CD14-positive monocyte (primary cell): ENCODE measurements at regions of chr6 and their contacts with region 1.

Region 1: DNA sequence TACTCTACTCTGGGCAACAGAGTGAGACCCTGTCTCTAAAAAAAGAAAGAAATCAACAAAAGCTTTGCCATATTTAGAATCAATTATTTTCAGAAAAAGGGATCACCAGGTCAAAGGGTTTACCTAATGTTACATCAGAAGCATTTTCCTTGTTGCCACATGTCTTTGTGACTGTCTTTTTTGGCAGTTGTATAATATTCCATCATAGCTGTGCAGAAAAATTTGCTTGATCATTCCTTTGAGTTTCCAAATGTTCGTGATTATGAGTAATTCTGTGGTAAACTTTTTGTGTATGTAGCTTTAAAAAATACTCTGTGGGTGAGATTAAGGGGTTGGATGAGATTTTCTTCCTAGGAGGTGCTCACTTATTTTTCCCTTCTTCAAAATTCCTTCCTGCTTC is 26.4 kb downstream of the PNPLA1 start:
- DNase-seq: peak; percentile 73 to 92 (median 90)
- H3K4me3 ChIP-seq: peak overlapping the region in 1 of 3 experiments; percentile 40
- H3K4me3 Mint-ChIP-seq: peak overlapping the region in 1 of 2 donors; percentile 30
- H3K27ac ChIP-seq: peak overlapping the region; percentile 86 to 90
- H3K27ac Mint-ChIP-seq: peak overlapping the region; percentile 88 to 98 (median 93)
- H3K4me1 ChIP-seq: peaks cover 65 to 84% of the 10 kb centered on the region in 2 donors
- H3K4me1 Mint-ChIP-seq: peaks cover 83% of the 10 kb centered on the region
- H3K27me3 ChIP-seq: no peaks in the 10 kb centered on the region
- H3K27me3 Mint-ChIP-seq: peaks cover 0 to 7% (median 5%) of the 10 kb centered on the region in 3 donors
- CTCF ChIP-seq: no peak

Region 2: DNA sequence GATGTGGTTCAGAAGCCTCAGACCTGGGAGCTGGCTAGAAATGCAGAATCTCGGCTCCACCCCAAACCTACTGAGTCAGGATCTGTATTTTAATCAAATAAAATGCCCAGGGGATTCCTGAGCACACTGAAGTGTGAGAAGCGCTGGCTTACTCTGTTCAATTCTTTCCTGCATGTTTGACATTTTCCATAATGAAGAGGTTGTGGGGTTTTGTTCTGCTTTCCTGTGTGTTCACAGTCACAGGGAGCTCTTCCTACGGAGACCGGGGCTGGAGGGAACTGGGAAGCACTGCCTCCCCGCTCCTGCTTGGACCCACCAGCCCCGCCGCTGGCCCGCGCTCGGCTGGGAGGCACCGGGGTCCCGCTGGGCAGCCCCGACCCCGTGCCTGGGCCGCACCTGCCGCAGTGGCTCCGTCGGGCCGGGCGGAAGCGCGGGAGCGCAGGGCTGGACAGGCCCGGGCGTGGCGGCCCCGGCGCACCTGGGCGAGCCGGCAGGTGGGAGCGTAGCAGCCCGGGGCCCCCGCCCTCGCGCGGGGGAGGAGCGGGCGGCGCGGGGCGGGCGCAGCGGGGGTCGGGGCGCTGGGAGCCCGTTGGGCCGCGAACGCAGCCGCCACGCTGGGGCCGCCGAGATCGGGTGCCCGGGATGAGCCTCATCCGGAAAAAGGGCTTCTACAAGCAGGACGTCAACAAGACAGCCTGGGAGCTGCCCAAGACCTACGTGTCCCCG is 166.1 kb before region 1 on chr6 and contains the start of gene MAPK13:
- intact Hi-C with region 1: loop called (anchors 2 to 5 kb)
- DNase-seq: peak in 2 of 3 donors; percentile 39 to 44
- H3K4me3 ChIP-seq: peak within 1 kb of the TSS; percentile 9 to 72 (median 30)
- H3K4me3 Mint-ChIP-seq: peak within 1 kb of the TSS; percentile 73 to 86
- H3K27ac ChIP-seq: peak within 1 kb of the TSS; percentile 4 to 27
- H3K27ac Mint-ChIP-seq: peak within 1 kb of the TSS in 6 of 7 donors; percentile 40 to 74 (median 66)
- H3K4me1 ChIP-seq: peaks cover 50 to 59% of the 10 kb centered on the region in 2 donors
- H3K4me1 Mint-ChIP-seq: peaks cover 64% of the 10 kb centered on the region
- H3K27me3 ChIP-seq: peaks cover 0 to 5% of the 10 kb centered on the region in 2 donors
- H3K27me3 Mint-ChIP-seq: peaks cover 14 to 19% (median 16%) of the 10 kb centered on the region in 3 donors
- CTCF ChIP-seq: no peak
- polyA plus RNA-seq, gene MAPK13: 0.88 to 9.8 (median 2.4) TPM

Region 3: DNA sequence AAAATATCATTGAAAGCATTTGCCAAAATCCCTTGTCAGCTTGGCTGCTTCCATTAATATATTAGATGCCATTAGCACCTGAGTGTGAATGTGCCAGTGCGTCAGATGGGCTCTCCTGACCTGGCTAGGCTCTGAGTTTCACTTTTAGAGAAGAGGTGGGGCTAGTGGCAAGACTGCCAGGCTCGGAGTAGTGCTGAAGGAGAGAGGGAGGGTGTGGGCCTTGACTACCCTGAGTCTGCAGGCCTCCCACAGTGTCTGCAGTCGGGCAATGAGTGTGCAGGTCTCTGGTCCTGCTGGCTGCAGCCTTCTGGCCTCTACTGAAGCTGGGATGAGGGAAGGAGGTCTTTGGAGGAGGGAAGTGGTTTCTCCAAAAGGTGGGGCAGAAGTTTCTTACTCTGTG is 60.9 kb before region 1 on chr6:
- intact Hi-C with region 1: no loop called
- DNase-seq: no peak
- H3K4me3 ChIP-seq: no peak overlapping the region
- H3K4me3 Mint-ChIP-seq: peak overlapping the region in 1 of 2 donors; percentile 17
- H3K27ac ChIP-seq: no peak overlapping the region
- H3K27ac Mint-ChIP-seq: peak overlapping the region in 5 of 7 donors; percentile 16 to 74 (median 48)
- H3K4me1 ChIP-seq: peaks cover 22 to 25% of the 10 kb centered on the region in 2 donors
- H3K4me1 Mint-ChIP-seq: peaks cover 25% of the 10 kb centered on the region
- H3K27me3 ChIP-seq: no peaks in the 10 kb centered on the region
- H3K27me3 Mint-ChIP-seq: peaks cover 0 to 1% (median 0%) of the 10 kb centered on the region in 3 donors
- CTCF ChIP-seq: no peak

Region 4: GRCh38 chr6:36459501-36459900 is 163.3 kb after region 1 on chr6:
- intact Hi-C with region 1: no loop called
- DNase-seq: no peak
- H3K4me3 ChIP-seq: no peak overlapping the region
- H3K4me3 Mint-ChIP-seq: no peak overlapping the region
- H3K27ac ChIP-seq: no peak overlapping the region
- H3K27ac Mint-ChIP-seq: no peak overlapping the region
- H3K4me1 ChIP-seq: peaks cover 7 to 11% of the 10 kb centered on the region in 2 donors
- H3K4me1 Mint-ChIP-seq: peaks cover 29% of the 10 kb centered on the region
- H3K27me3 ChIP-seq: no peaks in the 10 kb centered on the region
- H3K27me3 Mint-ChIP-seq: no peaks in the 10 kb centered on the region
- CTCF ChIP-seq: no peak